Caco-2 (cell line): ENCODE measurements at regions of chr6 and their contacts with region 1.

Region 1: DNA sequence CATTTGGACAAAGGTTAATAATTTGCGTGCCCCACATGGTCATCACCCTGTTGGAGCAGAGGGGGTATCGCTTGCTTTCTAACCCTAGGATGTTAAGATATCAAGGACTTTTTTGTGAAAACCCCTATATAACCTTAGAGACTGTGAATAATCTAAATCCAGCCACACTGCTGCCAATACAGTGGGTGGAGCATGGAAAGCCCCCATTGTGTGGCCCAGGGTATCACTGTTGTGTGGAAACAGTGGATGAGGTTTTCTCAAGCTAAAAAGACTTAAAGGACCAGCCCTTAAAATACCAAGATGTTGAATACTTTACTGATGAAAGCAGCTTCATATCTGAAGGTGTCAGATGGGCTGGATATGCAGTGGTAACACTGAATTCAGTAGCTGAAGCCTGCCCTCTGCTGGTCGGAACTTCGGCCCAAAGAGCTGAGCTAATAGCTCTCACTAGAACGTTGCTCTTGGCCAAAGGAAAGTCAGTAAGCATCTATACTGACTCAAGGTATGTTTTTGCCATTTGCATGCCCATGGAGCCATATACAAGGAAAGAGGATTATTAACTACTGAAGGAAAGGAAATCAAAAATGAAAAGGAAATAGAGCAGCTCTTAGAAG is 695.2 kb downstream of the PHF3 start:
- DNase-seq: peak; percentile 80 to 84
- H3K4me3 ChIP-seq: no peak overlapping the region
- H3K4me3 Mint-ChIP-seq: no peak overlapping the region
- H3K27ac Mint-ChIP-seq: no peak overlapping the region
- H3K4me1 ChIP-seq: no peaks in the 10 kb centered on the region; the same call in 1 of the 2 replicates
- H3K4me1 Mint-ChIP-seq: peaks cover 6% of the 10 kb centered on the region
- H3K27me3 ChIP-seq: no peaks in the 10 kb centered on the region
- H3K27me3 Mint-ChIP-seq: no peaks in the 10 kb centered on the region
- CTCF ChIP-seq: peak; percentile 70 to 78

Region 2: DNA sequence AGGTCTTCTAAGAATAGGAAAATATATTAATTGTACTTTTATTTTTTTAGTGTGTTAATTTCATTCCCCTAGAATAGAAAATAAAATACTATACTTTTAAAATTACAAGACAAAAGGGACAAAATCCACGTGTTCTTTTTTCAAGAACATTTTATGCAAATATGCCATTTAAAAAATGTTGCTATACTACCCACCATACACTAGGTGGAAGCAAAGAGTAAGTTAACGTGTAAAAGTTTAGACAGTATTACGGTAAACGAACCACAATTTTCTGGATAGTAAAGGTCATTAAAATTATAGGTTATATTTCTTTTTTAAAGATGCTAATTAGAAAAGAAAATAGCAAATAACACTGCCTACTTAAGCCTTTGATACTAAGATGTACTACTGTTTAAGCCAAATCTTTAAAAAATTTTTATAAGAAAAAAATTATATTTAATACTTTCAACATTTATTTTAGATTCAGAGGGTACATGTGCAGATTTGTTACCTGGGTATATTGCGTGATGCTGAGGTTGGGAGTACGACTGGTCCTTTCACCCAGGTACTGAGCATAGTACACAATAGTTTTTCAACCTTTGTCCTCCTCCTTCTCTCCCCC is 407.6 kb before region 1 on chr6:
- CTCF ChIA-PET with region 1: no interaction called
- POLR2A ChIA-PET with region 1: no interaction called
- intact Hi-C with region 1: loop called (anchors 1 kb)
- DNase-seq: peak in 1 of 2 experiments; percentile 6
- H3K4me3 ChIP-seq: no peak overlapping the region
- H3K4me3 Mint-ChIP-seq: no peak overlapping the region
- H3K27ac Mint-ChIP-seq: no peak overlapping the region
- H3K4me1 ChIP-seq: no peaks in the 10 kb centered on the region
- H3K4me1 Mint-ChIP-seq: no peaks in the 10 kb centered on the region
- H3K27me3 ChIP-seq: no peaks in the 10 kb centered on the region
- H3K27me3 Mint-ChIP-seq: peaks cover 8% of the 10 kb centered on the region
- CTCF ChIP-seq: peak in 1 of 2 experiments; percentile 50

Region 3: GRCh38 chr6:64160486-64160885 is 170.3 kb before region 1 on chr6:
- CTCF ChIA-PET with region 1: no interaction called
- POLR2A ChIA-PET with region 1: no interaction called
- intact Hi-C with region 1: loop called (anchors 10 kb)
- DNase-seq: no peak
- H3K4me3 ChIP-seq: no peak overlapping the region
- H3K4me3 Mint-ChIP-seq: no peak overlapping the region
- H3K27ac Mint-ChIP-seq: no peak overlapping the region
- H3K4me1 ChIP-seq: no peaks in the 10 kb centered on the region
- H3K4me1 Mint-ChIP-seq: no peaks in the 10 kb centered on the region
- H3K27me3 ChIP-seq: no peaks in the 10 kb centered on the region
- H3K27me3 Mint-ChIP-seq: no peaks in the 10 kb centered on the region
- CTCF ChIP-seq: no peak

Region 4: DNA sequence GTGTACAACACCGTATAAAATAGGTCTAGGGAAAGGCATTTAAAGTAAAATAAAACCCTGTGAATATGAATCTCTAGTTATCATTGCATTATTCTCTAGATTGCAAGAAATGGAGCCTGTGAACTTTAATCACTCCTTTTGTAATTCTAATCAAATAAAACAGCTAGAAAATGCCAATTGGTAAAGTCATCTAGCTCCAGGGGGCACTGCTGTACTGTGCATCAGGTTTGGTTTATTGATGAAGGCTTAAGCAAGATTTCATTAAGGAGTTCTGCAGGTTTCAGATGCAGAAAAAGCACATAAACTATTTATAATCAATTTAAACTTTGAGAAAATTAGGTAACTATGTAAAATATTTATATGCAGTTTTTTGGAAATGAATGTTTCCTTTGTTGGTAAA is 50.2 kb before region 1 on chr6:
- CTCF ChIA-PET with region 1: interaction called, 26 read pairs
- POLR2A ChIA-PET with region 1: no interaction called
- intact Hi-C with region 1: loop called (anchors 1 kb)
- DNase-seq: peak in 1 of 2 experiments; percentile 45
- H3K4me3 ChIP-seq: no peak overlapping the region
- H3K4me3 Mint-ChIP-seq: no peak overlapping the region
- H3K27ac Mint-ChIP-seq: no peak overlapping the region
- H3K4me1 ChIP-seq: no peaks in the 10 kb centered on the region
- H3K4me1 Mint-ChIP-seq: peaks cover 7% of the 10 kb centered on the region
- H3K27me3 ChIP-seq: no peaks in the 10 kb centered on the region
- H3K27me3 Mint-ChIP-seq: no peaks in the 10 kb centered on the region
- CTCF ChIP-seq: peak; percentile 48 to 55

Region 5: GRCh38 chr6:64301307-64302236 is 29.2 kb before region 1 on chr6:
- CTCF ChIA-PET with region 1: no interaction called
- POLR2A ChIA-PET with region 1: no interaction called
- intact Hi-C with region 1: loop called (anchors 1 kb)
- DNase-seq: peak; percentile 66 to 70
- H3K4me3 ChIP-seq: no peak overlapping the region
- H3K4me3 Mint-ChIP-seq: peak overlapping the region; percentile 27
- H3K27ac Mint-ChIP-seq: peak overlapping the region; percentile 50
- H3K4me1 ChIP-seq: peaks cover 21% of the 10 kb centered on the region
- H3K4me1 Mint-ChIP-seq: peaks cover 13% of the 10 kb centered on the region
- H3K27me3 ChIP-seq: no peaks in the 10 kb centered on the region
- H3K27me3 Mint-ChIP-seq: no peaks in the 10 kb centered on the region
- CTCF ChIP-seq: no peak